Activated CD4-positive, alpha-beta T cell treated with anti-CD3 and anti-CD28 coated beads for 36 hours (primary cell): ENCODE measurements at regions of chr7 and their contacts with region 1.

Region 1: DNA sequence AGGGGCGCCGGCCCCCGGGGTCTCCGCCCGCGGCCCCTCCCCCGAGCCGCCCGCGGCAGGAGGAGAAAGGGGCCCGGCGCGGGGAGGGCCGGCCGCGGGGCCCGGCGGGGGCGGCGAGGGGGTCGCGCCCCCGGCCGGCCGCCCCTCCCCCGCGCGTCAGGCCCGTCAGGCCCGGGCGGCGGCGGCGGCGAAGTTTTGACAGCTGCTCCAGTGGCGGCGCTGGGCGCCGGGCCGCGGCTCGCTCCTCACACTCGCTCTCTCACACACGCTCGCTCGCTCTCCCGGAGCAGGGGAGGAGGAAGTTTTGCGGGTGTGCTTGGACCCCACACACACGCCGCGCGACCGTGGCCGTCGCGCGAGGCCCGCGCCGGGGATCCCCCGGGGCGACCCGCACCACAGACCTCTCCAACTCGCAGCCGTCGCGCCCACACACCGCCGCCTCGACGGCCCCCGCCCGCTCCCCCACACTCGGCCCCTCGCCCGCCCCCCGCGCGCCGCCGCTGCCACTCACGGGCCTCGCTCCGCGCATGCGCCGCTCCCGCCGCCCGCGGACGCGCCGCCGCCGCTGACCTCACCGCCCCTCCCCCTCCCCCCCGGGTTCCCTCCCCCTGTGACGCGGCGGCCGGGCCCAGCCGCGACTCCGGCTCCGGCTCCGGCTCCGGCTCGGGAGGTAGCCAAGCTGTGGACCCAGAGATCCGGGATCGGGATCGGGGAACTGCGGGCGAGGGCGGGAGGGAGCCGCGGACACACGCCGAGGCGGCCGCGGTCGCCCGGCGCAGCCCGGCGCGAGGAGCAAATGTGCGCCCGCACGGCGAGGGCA is 518 bp upstream of the KMT2C start:
- DNase-seq: peak; percentile 93
- ATAC-seq: peak; percentile 55
- H3K4me3 Mint-ChIP-seq: peak overlapping the region; percentile 74
- H3K27ac Mint-ChIP-seq: peak overlapping the region; percentile 82
- H3K4me1 Mint-ChIP-seq: peaks cover 22% of the 10 kb centered on the region
- H3K27me3 Mint-ChIP-seq: no peaks in the 10 kb centered on the region

Region 2: DNA sequence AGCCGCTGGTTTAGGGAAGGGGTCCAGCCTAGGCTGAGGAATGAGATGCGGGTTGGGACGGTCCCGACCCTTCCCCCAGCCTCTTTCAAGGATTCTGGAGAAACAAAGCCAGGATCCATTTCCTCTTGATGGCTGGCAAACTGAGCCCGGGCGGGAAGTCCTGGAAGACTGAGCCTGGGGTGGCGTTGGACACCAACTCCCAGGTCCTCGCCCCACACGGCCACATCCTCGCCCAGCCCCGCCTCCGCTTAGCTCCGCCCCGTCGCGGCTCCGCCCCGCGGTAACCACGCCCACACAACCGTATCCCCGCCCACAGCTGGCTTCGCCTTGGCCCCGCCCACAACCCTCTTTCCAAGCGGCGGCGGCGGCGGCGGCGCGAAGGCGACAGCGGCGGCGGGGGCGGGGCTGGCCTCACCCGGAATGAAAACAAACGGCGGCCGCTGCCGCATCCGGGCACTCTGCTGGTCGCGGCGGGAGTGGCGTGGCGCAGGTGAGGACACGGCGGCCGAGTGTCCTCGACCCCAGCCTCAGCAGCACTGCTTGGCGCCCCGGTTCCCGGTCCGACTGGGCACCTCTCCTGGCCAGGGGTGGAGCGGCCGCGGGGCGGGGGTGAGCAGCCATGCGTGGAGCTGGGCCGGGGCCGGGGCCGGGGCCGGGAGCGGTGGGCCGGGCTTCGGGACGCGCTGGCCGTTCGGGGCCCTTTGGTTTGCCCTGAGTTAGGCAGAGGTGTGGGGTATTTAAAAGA is 1094.8 kb before region 1 on chr7 and contains the start of gene NUB1:
- CTCF ChIA-PET with region 1: no interaction called
- POLR2A ChIA-PET with region 1: no interaction called
- intact Hi-C with region 1: loop called in 1 of 2 experiments (anchors 10 kb)
- DNase-seq: peak; percentile 96
- ATAC-seq: peak; percentile 82
- H3K4me3 Mint-ChIP-seq: peak within 1 kb of the TSS; percentile 76
- H3K27ac Mint-ChIP-seq: peak within 1 kb of the TSS; percentile 78
- H3K4me1 Mint-ChIP-seq: peaks cover 46% of the 10 kb centered on the region
- H3K27me3 Mint-ChIP-seq: no peaks in the 10 kb centered on the region
- total RNA-seq, gene NUB1: 51.4 to 70.4 TPM

Region 3: DNA sequence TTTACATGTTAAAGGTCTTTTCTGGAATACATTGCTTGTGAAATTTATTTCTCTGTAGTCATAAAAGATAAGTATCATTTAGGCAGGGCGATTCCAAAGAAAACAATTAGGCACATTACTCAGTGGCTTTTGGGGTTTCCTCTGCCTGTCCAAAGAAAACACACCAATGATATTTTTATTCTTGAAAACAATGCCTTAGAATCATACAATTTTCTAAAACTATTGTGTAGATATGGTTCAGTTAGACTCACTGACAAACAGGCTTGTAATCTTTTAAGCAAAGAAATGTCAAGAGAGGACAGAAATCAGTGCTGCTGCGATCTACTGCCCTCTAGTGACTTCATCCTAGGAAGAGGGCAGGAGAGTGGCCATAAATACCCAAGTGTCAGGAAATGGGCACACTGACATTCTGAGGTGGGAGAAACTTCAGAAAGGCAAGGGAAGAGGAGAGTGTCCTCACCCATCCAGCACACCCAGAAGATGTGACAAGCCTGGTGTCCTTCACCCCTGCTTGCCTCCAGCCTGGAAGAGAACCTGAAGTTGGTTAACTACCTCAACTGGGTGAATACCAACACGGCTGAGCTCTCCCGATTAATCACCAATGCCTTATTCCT is 290.4 kb before region 1 on chr7:
- CTCF ChIA-PET with region 1: no interaction called
- POLR2A ChIA-PET with region 1: no interaction called
- intact Hi-C with region 1: loop called in 1 of 2 experiments (anchors 10 kb)
- DNase-seq: peak; percentile 52
- ATAC-seq: peak; percentile 43
- H3K4me3 Mint-ChIP-seq: no peak overlapping the region
- H3K27ac Mint-ChIP-seq: peak overlapping the region; percentile 93
- H3K4me1 Mint-ChIP-seq: peaks cover 48% of the 10 kb centered on the region
- H3K27me3 Mint-ChIP-seq: no peaks in the 10 kb centered on the region

Region 4: GRCh38 chr7:152463709-152464311 is 27.5 kb after region 1 on chr7:
- CTCF ChIA-PET with region 1: interaction called, 6 read pairs
- POLR2A ChIA-PET with region 1: interaction called, 6 read pairs
- intact Hi-C with region 1: loop called (anchors 1 kb)
- DNase-seq: peak; percentile 100
- ATAC-seq: peak; percentile 95
- H3K4me3 Mint-ChIP-seq: peak overlapping the region; percentile 88
- H3K27ac Mint-ChIP-seq: no peak overlapping the region
- H3K4me1 Mint-ChIP-seq: peaks cover 5% of the 10 kb centered on the region
- H3K27me3 Mint-ChIP-seq: no peaks in the 10 kb centered on the region

Region 5: GRCh38 chr7:152476551-152476950 is 40.2 kb after region 1 on chr7:
- CTCF ChIA-PET with region 1: no interaction called
- POLR2A ChIA-PET with region 1: no interaction called
- intact Hi-C with region 1: no loop called
- DNase-seq: no peak
- ATAC-seq: no peak
- H3K4me3 Mint-ChIP-seq: no peak overlapping the region
- H3K27ac Mint-ChIP-seq: no peak overlapping the region
- H3K4me1 Mint-ChIP-seq: no peaks in the 10 kb centered on the region
- H3K27me3 Mint-ChIP-seq: no peaks in the 10 kb centered on the region

Region 6: GRCh38 chr7:152675759-152676636 is 239.7 kb after region 1 on chr7 and contains the start of gene XRCC2:
- CTCF ChIA-PET with region 1: no interaction called
- POLR2A ChIA-PET with region 1: no interaction called
- intact Hi-C with region 1: loop called (anchors 1 to 10 kb)
- DNase-seq: peak; percentile 97
- ATAC-seq: peak; percentile 96
- H3K4me3 Mint-ChIP-seq: peak within 1 kb of the TSS; percentile 83
- H3K27ac Mint-ChIP-seq: peak within 1 kb of the TSS; percentile 98
- H3K4me1 Mint-ChIP-seq: peaks cover 8% of the 10 kb centered on the region
- H3K27me3 Mint-ChIP-seq: no peaks in the 10 kb centered on the region
- total RNA-seq, gene XRCC2: 19.3 to 23.6 TPM

Region 7: GRCh38 chr7:152759949-152760853 is 323.9 kb after region 1 on chr7:
- CTCF ChIA-PET with region 1: no interaction called
- POLR2A ChIA-PET with region 1: no interaction called
- intact Hi-C with region 1: loop called in 1 of 2 experiments (anchors 1 kb)
- DNase-seq: peak; percentile 42
- ATAC-seq: peak; percentile 21
- H3K4me3 Mint-ChIP-seq: peak overlapping the region; percentile 91
- H3K27ac Mint-ChIP-seq: peak overlapping the region; percentile 91
- H3K4me1 Mint-ChIP-seq: peaks cover 20% of the 10 kb centered on the region
- H3K27me3 Mint-ChIP-seq: no peaks in the 10 kb centered on the region